AG04449 (cell line): ENCODE measurements at regions of chr6 and their contacts with region 1.

Region 1: GRCh38 chr6:149840345-149841075 is 23.6 kb downstream of the LRP11 start:
- DNase-seq: no peak
- H3K4me3 ChIP-seq: no peak overlapping the region
- CTCF ChIP-seq: peak; percentile 51

Region 2: DNA sequence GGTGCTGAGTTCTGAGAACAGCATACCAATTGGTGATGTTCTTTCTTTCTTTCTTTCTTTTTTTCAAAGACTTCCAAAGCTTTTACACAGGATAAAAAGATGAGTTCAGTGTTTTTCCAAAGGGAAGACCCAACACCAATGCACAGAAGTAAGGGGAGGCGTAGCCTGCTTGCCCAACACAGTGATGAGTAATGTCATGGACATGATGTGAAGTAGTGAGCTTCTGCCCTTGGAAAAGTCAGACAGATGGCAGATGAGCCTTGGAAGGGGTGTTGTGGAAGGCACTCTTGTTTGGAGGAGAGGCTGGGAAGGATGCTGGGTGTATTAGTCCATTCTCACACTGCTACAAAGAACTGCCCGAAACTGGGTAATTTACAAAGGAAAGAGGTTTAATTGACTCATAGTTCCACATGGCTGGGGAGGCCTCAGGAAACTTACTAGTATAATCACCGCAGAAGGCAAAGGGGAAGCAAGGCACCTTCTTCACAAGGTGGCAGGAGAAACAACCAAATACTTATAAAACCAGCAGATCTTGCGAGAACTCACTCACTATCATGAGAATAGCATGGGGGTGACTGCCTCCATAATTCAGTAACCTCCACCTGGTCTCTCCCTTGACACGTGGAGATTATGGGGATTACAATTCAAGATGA is 11.1 kb after region 1 on chr6:
- CTCF ChIA-PET with region 1: interaction called, 81 read pairs
- POLR2A ChIA-PET with region 1: interaction called, 6 read pairs
- DNase-seq: no peak
- H3K4me3 ChIP-seq: no peak overlapping the region
- CTCF ChIP-seq: no peak

Region 3: GRCh38 chr6:149863697-149864577 is 23.4 kb after region 1 on chr6 and contains the start of gene LRP11:
- CTCF ChIA-PET with region 1: interaction called, 61 read pairs
- POLR2A ChIA-PET with region 1: no interaction called
- DNase-seq: no peak
- H3K4me3 ChIP-seq: peak within 1 kb of the TSS; percentile 67
- CTCF ChIP-seq: no peak

Region 4: GRCh38 chr6:149925974-149926777 is 85.7 kb after region 1 on chr6:
- CTCF ChIA-PET with region 1: interaction called, 62 read pairs
- POLR2A ChIA-PET with region 1: no interaction called
- DNase-seq: no peak
- H3K4me3 ChIP-seq: peak overlapping the region; percentile 57
- CTCF ChIP-seq: peak; percentile 93

Region 5: DNA sequence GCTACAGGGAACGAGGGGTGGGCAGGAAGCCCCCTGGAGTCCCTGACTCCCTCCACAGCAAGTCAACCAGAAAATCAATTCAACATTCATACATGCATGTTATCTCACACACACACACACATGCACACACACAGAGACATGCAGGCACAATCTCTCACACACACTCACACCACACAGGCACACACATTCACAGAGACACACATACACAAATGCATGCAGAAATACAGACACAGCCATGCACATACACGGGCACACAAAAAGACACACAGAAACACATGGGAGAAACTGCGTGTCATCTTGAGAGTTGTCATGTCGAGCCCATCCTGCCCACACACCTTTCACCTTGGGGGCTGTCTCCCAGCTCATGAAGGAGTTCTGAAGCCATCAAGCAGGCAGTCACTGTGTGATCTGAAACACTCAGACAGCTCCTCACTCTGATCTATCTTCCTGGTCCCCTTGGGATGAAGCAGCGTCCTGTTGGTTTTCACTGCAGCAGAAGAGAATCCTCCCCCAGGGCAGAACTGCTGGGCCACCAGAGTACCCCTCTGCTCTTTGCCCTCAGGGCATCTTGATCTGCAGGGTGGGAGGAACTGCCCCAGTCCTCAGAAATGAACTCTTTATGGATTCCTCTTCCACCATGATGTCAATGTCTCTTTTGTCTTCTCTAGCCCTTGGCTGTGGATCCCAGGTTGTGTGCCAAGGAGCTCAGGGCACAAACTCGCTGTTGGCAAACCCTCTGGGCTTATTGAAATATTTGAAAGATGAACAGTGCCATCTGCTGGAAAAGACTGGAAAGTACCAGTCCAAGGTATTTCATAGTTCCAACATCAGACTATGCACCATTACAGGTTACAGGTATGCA is 176.0 kb after region 1 on chr6:
- CTCF ChIA-PET with region 1: interaction called, 14 read pairs
- POLR2A ChIA-PET with region 1: no interaction called
- DNase-seq: no peak
- H3K4me3 ChIP-seq: no peak overlapping the region
- CTCF ChIP-seq: peak; percentile 43

Region 6: DNA sequence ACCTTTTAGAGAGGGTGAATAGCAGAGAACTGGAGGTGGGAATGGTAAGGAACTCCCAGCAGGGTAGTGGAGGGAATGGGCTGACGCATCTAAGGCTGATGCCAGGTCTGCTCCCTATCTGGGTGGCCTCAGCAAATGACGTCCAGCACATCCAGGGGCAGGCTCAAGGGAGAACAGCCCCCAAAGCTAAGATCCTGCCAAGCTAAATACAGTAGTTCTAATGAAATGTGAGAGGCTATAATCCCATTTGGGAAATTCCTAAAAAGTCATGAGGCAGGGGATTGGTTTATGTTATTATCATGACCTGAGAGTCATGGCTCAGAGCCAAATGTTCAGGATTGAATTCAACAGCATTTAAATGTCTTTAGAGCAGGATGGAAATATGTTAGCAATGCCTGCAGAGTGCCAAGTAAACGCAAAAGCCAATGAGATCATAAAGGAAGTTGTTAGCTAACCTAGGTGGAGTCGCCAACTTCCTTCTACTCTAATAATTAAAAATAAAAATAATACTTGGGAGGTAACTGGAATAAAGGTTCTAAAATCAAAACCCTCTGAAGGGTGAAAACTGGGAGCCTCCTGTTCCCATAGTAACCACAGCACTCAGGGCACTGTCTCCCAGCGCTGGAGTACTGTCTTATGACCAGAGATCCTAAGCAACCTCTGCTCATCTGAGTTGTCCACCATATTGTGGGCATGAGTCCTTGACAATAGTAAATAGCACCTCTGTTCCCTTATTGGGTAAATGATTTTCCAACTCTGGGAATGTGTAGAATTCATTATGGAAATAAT is 563.1 kb after region 1 on chr6:
- CTCF ChIA-PET with region 1: no interaction called
- POLR2A ChIA-PET with region 1: no interaction called
- DNase-seq: peak; percentile 52
- H3K4me3 ChIP-seq: no peak overlapping the region
- CTCF ChIP-seq: no peak